IMR-90 (cell line): ENCODE measurements at regions of chr17 and their contacts with region 1.

Region 1: DNA sequence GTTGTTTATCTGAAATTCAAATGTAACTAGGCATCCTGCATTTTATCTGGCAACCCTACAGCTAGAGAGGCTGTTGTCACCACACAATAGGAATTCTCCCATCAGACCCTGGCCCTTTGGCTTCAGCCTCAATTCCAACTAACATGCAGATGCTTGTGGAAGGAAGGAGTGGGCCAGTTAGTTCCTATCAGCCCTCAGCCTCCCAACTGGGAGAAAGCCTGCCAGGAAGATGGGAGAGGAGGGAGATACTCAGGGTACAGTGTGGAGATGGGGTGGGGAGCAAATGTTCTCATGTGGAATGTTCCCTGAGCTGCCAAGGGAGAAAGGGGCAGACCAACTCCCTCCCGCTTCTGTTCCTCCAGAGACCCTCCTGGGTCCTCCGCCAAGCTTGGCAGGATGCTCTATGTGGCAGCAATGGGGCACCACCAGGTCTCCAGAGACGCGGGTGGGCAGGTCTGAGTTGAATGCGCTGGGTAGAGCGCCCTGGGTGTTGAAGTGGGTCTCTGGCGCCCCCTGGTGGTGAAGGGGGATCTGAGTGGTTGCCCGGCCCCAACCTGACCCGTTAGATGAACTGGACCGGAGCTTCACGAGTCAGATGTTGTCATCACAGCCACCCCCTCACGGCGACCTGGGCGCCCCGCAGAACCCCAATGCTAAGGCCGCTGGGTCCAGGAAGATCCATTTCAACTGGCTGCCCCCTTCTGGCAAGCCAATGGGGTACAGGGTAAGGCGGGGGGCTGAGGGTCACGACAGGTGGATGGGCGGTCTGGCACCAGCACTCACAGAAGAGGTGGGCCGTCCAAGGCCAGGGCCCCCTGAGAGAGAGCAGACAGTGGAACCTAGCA is 15.2 kb downstream of the GALK1 start:
- DNase-seq: peak; percentile 52
- ATAC-seq: peak; percentile 73
- H3K4me3 ChIP-seq: no peak overlapping the region
- H3K27ac ChIP-seq: no peak overlapping the region
- H3K4me1 ChIP-seq: peaks cover 6% of the 10 kb centered on the region
- H3K27me3 ChIP-seq: no peaks in the 10 kb centered on the region; the same call in 1 of the 2 replicates
- CTCF ChIP-seq: peak; percentile 87
- POLR2A ChIP-seq: no peak
- RAD21 ChIP-seq: peak; percentile 82

Region 2: DNA sequence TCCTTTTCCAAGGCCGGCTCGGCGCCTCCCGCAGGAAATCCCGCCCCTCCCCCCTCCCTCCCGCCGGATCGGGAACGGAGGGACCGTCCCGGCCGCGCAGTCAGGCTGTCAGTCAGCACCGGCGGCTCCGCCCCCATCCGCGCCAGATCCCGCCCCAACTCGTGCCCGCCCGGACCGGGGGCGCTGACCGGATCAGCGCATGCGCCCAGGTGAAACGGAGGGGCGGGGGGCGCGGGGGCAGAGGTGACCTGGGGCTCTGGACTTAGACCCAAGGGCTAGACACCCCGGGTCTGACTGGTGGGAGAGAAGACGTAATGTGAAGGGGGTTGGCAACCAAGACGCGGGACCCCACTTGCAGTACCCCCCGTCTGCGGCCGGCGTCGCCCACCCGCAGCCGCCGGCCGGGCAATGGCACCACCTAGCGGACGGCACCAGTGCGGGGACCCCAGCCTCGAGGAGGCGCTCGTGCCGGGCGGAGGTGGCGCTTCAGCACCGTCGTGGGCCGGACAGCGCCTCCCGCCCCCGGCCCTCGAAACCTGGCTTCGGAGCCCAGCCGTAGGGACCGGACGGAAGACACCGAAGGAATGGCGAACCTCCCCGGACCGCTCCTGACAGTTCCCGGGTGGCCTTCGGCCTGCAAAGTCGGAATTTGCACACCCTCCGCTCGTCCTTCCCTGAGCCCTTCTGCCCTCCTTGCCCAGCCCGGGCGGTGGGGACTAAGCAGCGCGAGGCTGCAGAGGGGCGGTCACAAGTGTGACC is 234.1 kb before region 1 on chr17 and contains the start of gene CASKIN2:
- CTCF ChIA-PET with region 1: interaction called, 3 read pairs
- POLR2A ChIA-PET with region 1: no interaction called
- dilution Hi-C with region 1: no loop called
- in situ Hi-C with region 1: no loop called
- intact Hi-C with region 1: loop called (anchors 5 kb)
- DNase-seq: peak; percentile 86
- ATAC-seq: peak; percentile 79
- H3K4me3 ChIP-seq: peak within 1 kb of the TSS; percentile 82
- H3K27ac ChIP-seq: peak within 1 kb of the TSS; percentile 51
- H3K4me1 ChIP-seq: peaks cover 10% of the 10 kb centered on the region; the same call in 1 of the 2 replicates
- H3K27me3 ChIP-seq: no peaks in the 10 kb centered on the region
- CTCF ChIP-seq: peak; percentile 100
- POLR2A ChIP-seq: no peak
- RAD21 ChIP-seq: peak; percentile 82
- total RNA-seq, gene CASKIN2: 2.2 and 2.9 TPM in 2 replicates

Region 3: GRCh38 chr17:75632863-75633485 is 116.8 kb before region 1 on chr17 and contains the start of gene SMIM5:
- CTCF ChIA-PET with region 1: interaction called, 53 read pairs
- POLR2A ChIA-PET with region 1: interaction called, 3 read pairs
- dilution Hi-C with region 1: no loop called
- in situ Hi-C with region 1: loop called (anchors 5 kb)
- intact Hi-C with region 1: loop called (anchors 1 kb)
- DNase-seq: peak; percentile 83
- ATAC-seq: peak; percentile 93
- H3K4me3 ChIP-seq: no peak within 1 kb of the TSS
- H3K27ac ChIP-seq: peak within 1 kb of the TSS; percentile 0; the same call in 1 of the 2 replicates
- H3K4me1 ChIP-seq: peaks cover 15% of the 10 kb centered on the region
- H3K27me3 ChIP-seq: no peaks in the 10 kb centered on the region
- CTCF ChIP-seq: peak; percentile 94
- POLR2A ChIP-seq: no peak
- RAD21 ChIP-seq: peak; percentile 69
- total RNA-seq, gene SMIM5: not detected in 2 replicates

Region 4: DNA sequence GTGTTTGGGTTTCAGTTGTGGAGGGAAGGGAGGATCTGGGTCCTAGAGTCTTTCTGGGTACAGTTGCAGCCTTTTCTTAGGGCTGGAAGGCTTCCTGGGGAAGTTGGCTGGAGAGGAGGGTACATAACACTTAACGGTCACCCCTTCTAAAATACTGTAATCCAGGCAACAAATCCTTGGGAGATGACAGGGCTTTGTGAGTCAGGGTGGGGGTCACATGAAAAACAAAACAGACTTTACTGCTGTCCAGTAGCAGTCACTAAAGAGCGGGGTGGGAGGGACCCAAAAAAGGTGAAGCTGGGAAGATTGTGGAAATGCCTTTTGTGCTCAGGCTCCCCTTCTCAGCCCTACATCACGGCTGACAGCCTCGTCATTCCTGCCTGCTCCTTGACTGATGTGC is 76.3 kb before region 1 on chr17:
- CTCF ChIA-PET with region 1: interaction called, 9 read pairs
- POLR2A ChIA-PET with region 1: no interaction called
- dilution Hi-C with region 1: no loop called
- in situ Hi-C with region 1: loop called (anchors 5 kb)
- intact Hi-C with region 1: loop called (anchors 1 kb)
- DNase-seq: no peak
- ATAC-seq: no peak
- H3K4me3 ChIP-seq: no peak overlapping the region
- H3K27ac ChIP-seq: no peak overlapping the region
- H3K4me1 ChIP-seq: no peaks in the 10 kb centered on the region
- H3K27me3 ChIP-seq: no peaks in the 10 kb centered on the region
- CTCF ChIP-seq: no peak
- POLR2A ChIP-seq: no peak
- RAD21 ChIP-seq: no peak

Region 5: GRCh38 chr17:75679706-75680442 is 69.9 kb before region 1 on chr17:
- CTCF ChIA-PET with region 1: interaction called, 18 read pairs
- POLR2A ChIA-PET with region 1: no interaction called
- dilution Hi-C with region 1: no loop called
- in situ Hi-C with region 1: no loop called
- intact Hi-C with region 1: loop called (anchors 1 kb)
- DNase-seq: no peak
- ATAC-seq: peak; percentile 39; the same call in 1 of the 2 replicates
- H3K4me3 ChIP-seq: no peak overlapping the region
- H3K27ac ChIP-seq: no peak overlapping the region
- H3K4me1 ChIP-seq: peaks cover 8% of the 10 kb centered on the region
- H3K27me3 ChIP-seq: no peaks in the 10 kb centered on the region
- CTCF ChIP-seq: no peak
- POLR2A ChIP-seq: no peak
- RAD21 ChIP-seq: no peak

Region 6: GRCh38 chr17:75764711-75765421 is 15.1 kb after region 1 on chr17 and contains the start of gene GALK1:
- CTCF ChIA-PET with region 1: interaction called, 13 read pairs
- POLR2A ChIA-PET with region 1: interaction called, 3 read pairs
- dilution Hi-C with region 1: no loop called
- in situ Hi-C with region 1: no loop called
- intact Hi-C with region 1: no loop called
- DNase-seq: peak; percentile 55
- ATAC-seq: peak; percentile 92
- H3K4me3 ChIP-seq: peak within 1 kb of the TSS; percentile 55
- H3K27ac ChIP-seq: peak within 1 kb of the TSS; percentile 25; the same call in 1 of the 2 replicates
- H3K4me1 ChIP-seq: peaks cover 7% of the 10 kb centered on the region
- H3K27me3 ChIP-seq: no peaks in the 10 kb centered on the region
- CTCF ChIP-seq: peak; percentile 61
- POLR2A ChIP-seq: peak; percentile 28; the same call in 1 of the 2 replicates
- RAD21 ChIP-seq: peak; percentile 47
- total RNA-seq, gene GALK1: 18.9 and 21.9 TPM in 2 replicates